ENCODE measurements at regions of chr1 and their contacts with region 1.

Region 1: DNA sequence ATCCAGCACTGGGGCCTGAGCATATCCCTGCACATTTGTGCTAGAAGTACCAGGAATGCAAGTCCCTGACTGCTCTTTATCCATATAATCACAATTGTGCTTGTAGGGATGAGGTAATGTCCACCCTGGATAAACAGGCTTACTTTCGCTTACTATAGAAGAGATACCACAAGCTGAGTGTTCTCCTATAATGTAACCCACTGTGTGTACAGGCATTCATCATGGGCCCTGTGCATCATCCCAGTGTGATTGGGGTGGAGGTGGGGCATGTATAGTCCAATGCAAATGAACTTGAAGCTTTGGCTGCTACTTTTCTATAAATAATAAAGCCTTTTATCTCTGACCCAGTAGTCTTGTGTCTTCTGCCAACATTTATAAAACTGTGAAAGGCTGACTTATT is 69.3 kb downstream of the MAN1A2 start:
- DNase-seq: no peak
- ATAC-seq: no peak
- H3K4me3 ChIP-seq: no peak overlapping the region
- H3K4me3 Mint-ChIP-seq: no peak overlapping the region
- H3K27ac ChIP-seq: no peak overlapping the region
- H3K27ac Mint-ChIP-seq: no peak overlapping the region
- H3K4me1 ChIP-seq: no peaks in the 10 kb centered on the region
- H3K4me1 Mint-ChIP-seq: peaks cover 0 to 25% (median 16%) of the 10 kb centered on the region in 7 donors
- H3K27me3 ChIP-seq: no peaks in the 10 kb centered on the region
- H3K27me3 Mint-ChIP-seq: no peaks in the 10 kb centered on the region

Region 2: DNA sequence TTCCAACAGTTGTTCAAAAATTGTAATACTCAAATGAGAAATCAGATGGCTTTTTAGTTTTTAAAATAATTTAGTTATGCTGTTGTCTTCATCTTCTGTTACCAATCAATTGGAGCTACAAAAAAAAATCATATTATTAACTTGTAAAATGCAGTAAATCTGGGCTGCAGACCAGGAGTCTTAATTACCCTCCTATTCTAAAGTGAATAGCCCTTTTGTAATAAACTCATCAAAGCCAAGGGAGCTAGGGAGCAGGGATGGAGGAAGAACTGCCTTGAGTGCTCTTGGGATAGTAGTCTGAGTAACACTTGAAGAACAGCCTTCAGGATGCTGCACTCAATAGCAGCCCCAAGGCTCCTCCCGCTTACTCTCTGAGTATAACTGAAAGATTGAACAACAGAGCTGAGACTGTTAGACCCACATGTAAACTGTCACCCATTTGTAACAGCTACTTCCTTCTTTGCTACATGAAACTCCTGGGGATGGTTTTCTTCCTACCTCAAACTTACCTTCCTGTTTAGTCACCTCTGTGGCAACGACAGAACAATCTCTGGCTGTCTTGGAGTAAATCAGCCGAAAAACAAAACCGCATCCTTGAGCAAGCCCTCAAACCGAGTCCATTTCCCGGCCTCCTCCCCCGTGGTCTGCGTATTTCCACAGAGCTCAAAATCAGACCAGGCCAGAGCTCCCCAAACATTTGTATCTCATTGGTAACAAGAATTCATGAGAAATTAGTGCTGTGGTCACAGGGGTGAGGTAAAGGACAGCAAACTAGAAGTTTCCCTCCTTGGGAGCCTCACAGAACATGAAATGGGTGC is 921.6 kb before region 1 on chr1:
- CTCF ChIA-PET with region 1: no interaction called
- POLR2A ChIA-PET with region 1: no interaction called
- intact Hi-C with region 1: no loop called
- DNase-seq: peak in 8 of 9 donors; percentile 11 to 71 (median 30)
- ATAC-seq: peak; percentile 82
- H3K4me3 ChIP-seq: peak overlapping the region; percentile 12
- H3K4me3 Mint-ChIP-seq: peak overlapping the region; percentile 48 to 82 (median 72)
- H3K27ac ChIP-seq: peak overlapping the region; percentile 25
- H3K27ac Mint-ChIP-seq: peak overlapping the region; percentile 66 to 93 (median 88)
- H3K4me1 ChIP-seq: peaks cover 30 to 49% of the 10 kb centered on the region in 2 donors
- H3K4me1 Mint-ChIP-seq: peaks cover 37 to 72% (median 53%) of the 10 kb centered on the region in 7 donors
- H3K27me3 ChIP-seq: no peaks in the 10 kb centered on the region
- H3K27me3 Mint-ChIP-seq: no peaks in the 10 kb centered on the region

Region 3: DNA sequence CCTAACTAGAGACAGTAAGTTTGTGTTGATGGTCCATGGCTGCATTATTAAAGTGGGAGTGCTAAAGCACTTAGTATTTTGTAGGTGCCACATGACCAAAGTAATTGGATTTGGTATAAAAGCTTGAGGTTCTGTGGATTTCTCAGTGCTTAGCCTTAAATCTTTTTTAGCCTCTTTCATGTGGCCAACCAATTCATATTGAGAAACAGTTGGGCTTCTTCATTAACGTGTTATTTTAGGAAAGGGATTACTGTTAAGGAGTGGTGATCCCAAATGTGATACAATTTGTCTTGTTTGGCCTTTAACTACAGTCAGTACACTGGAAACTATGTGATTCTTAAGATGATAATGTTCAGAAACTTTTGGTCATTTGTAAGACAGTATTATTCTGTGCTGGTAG is 43.7 kb before region 1 on chr1:
- CTCF ChIA-PET with region 1: no interaction called
- POLR2A ChIA-PET with region 1: no interaction called
- intact Hi-C with region 1: no loop called
- DNase-seq: no peak
- ATAC-seq: no peak
- H3K4me3 ChIP-seq: no peak overlapping the region
- H3K4me3 Mint-ChIP-seq: no peak overlapping the region
- H3K27ac ChIP-seq: no peak overlapping the region
- H3K27ac Mint-ChIP-seq: no peak overlapping the region
- H3K4me1 ChIP-seq: peaks cover 6 to 11% of the 10 kb centered on the region in 2 donors
- H3K4me1 Mint-ChIP-seq: peaks cover 11 to 88% (median 76%) of the 10 kb centered on the region in 7 donors
- H3K27me3 ChIP-seq: no peaks in the 10 kb centered on the region
- H3K27me3 Mint-ChIP-seq: no peaks in the 10 kb centered on the region

Region 4: DNA sequence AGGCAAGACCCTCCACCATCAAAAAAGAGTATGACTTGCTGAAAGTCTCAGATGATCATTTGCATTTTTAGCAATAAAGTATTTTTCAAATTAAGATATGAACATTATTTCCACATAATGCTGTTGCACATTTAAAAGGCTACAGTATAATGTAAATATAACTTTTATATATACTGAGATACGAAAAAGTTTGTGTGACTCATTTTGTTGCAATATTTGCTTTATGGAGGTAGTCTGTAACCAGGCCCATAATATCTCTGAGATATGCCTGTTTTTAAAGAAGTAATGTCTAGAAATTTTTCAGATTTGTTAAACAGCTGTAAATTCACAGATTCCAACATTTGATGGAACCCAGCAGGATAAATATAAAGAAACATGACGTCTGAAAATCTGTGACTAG is 17.4 kb after region 1 on chr1:
- CTCF ChIA-PET with region 1: interaction called, 4 read pairs
- POLR2A ChIA-PET with region 1: no interaction called
- intact Hi-C with region 1: loop called in 1 of 2 experiments (anchors 2 kb)
- DNase-seq: no peak
- ATAC-seq: no peak
- H3K4me3 ChIP-seq: no peak overlapping the region
- H3K4me3 Mint-ChIP-seq: no peak overlapping the region
- H3K27ac ChIP-seq: no peak overlapping the region
- H3K27ac Mint-ChIP-seq: no peak overlapping the region
- H3K4me1 ChIP-seq: no peaks in the 10 kb centered on the region
- H3K4me1 Mint-ChIP-seq: peaks cover 0 to 7% (median 0%) of the 10 kb centered on the region in 7 donors
- H3K27me3 ChIP-seq: no peaks in the 10 kb centered on the region
- H3K27me3 Mint-ChIP-seq: no peaks in the 10 kb centered on the region

Region 5: GRCh38 chr1:117512743-117513321 is 76.3 kb after region 1 on chr1:
- CTCF ChIA-PET with region 1: no interaction called
- POLR2A ChIA-PET with region 1: no interaction called
- intact Hi-C with region 1: no loop called
- DNase-seq: peak in 5 of 9 donors; percentile 22 to 34 (median 25)
- ATAC-seq: peak; percentile 57
- H3K4me3 ChIP-seq: no peak overlapping the region
- H3K4me3 Mint-ChIP-seq: no peak overlapping the region
- H3K27ac ChIP-seq: no peak overlapping the region
- H3K27ac Mint-ChIP-seq: no peak overlapping the region
- H3K4me1 ChIP-seq: no peaks in the 10 kb centered on the region
- H3K4me1 Mint-ChIP-seq: peaks cover 0 to 3% (median 0%) of the 10 kb centered on the region in 7 donors
- H3K27me3 ChIP-seq: no peaks in the 10 kb centered on the region
- H3K27me3 Mint-ChIP-seq: no peaks in the 10 kb centered on the region

Measured in naive thymus-derived CD4-positive, alpha-beta T cell (primary cell).